Left colon (tissue), 2 donors: ENCODE measurements at regions of chr11 and their contacts with region 1.

Region 1: GRCh38 chr11:124673333-124674167 is at the starts of genes SIAE and SPA17:
- DNase-seq: peak; percentile 95 to 96
- ATAC-seq: peak; percentile 93
- total RNA-seq, gene SIAE: 207 to 293 TPM
- total RNA-seq, gene SPA17: 7.4 to 8.7 TPM

Region 2: GRCh38 chr11:124429599-124429998 is 244.0 kb before region 1 on chr11:
- intact Hi-C with region 1: no loop called
- DNase-seq: no peak
- ATAC-seq: no peak

Region 3: GRCh38 chr11:124837491-124837856 is 163.9 kb after region 1 on chr11:
- intact Hi-C with region 1: loop called in 1 of 2 experiments (anchors 10 kb)
- DNase-seq: no peak
- ATAC-seq: peak; percentile 55

Region 4: DNA sequence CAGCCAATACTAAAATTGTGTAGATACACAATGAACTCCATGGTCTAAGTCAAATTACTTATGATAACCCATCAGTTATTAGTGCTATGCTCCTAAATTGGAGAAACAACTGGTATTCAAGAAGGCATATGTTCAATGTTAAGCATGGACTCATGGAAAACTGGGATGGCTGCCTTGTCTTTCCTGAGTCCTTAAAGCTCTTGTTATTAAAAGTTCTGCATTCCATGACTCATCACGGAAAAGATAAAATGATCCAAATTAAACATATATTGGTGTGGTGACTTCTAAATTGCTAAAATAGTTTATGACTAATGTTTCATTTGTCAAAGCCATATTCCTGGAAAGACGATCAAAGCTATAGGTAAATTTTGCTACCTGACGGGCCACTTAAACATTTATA is 886.3 kb after region 1 on chr11:
- intact Hi-C with region 1: no loop called
- DNase-seq: no peak
- ATAC-seq: no peak